ENCODE measurements at regions of chr1 and their contacts with region 1.

Region 1: GRCh38 chr1:56831871-56832693 is 12.9 kb upstream of the FYB2 start:
- DNase-seq: peak in 1 of 2 donors; percentile 26
- H3K4me3 ChIP-seq: peak overlapping the region; percentile 0 to 7
- H3K27ac ChIP-seq: no peak overlapping the region
- H3K4me1 ChIP-seq: peaks cover 0 to 4% (median 0%) of the 10 kb centered on the region in 4 donors
- H3K27me3 ChIP-seq: peaks cover 0 to 24% of the 10 kb centered on the region in 2 donors
- CTCF ChIP-seq: peak; percentile 86 to 94

Region 2: DNA sequence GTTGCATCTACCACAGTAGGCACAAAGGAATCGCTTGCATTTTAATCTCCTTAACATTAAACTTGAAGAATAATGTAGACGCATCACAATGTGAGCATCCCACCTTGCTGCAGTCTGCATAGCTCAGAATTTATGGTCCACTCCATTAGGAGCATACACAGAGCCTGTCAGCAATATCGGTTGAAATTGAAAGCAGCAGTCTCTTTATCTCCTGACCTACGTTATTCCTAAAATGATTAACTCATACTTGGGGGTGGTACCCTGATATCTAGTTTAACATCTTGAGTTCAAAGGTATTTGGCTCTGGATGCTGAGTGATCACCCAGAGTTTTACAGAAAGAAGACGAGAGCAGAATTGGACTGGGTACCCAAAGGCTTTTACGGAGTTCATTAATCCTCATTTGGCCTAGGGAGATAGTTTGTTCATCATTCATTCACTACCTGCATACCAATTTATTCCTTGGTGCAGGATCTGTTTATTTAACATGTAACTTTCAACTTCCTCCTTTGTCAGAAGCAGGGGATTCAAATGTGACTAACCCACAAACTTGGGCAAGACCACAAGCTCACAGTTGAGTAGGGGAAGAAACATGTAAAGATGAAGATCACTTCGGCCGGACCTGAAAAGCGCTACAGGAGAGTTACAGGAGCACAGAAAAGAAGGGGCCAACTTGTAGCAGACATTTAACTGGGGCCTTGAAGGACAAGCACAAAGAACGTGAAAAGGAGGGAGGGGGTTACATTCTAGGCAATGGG is 403.9 kb after region 1 on chr1:
- intact Hi-C with region 1: no loop called
- DNase-seq: no peak
- H3K4me3 ChIP-seq: no peak overlapping the region
- H3K27ac ChIP-seq: no peak overlapping the region
- H3K4me1 ChIP-seq: no peaks in the 10 kb centered on the region
- H3K27me3 ChIP-seq: no peaks in the 10 kb centered on the region
- CTCF ChIP-seq: no peak

Region 3: DNA sequence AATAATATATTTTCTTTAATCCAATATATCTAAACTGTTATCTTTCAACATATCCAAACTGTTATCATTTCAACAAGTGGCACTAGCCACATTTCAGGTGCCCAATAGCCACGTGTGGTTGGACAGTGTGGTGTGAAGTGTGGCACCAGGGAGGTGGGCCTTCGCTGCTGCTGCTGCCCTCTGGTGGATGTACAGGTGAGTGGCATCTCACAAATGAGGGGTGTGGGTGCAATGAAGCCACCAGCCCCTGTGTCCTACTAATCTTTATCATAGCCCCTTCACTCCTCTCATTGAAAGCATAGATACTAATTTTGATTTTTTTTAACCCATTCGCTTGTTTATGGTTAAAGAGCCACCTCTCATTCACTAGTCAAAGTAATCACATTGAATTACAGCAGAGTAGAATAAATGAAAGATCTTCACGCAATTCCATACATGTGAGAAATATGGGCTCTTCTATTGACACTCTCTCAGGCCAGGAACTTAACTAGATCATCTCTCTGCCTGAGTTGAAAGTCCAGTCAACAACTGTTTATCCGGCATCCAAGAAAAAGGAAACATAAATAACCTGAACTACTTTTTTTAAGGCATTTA is 1215.3 kb after region 1 on chr1:
- intact Hi-C with region 1: loop called (anchors 5 kb)
- DNase-seq: no peak
- H3K4me3 ChIP-seq: no peak overlapping the region
- H3K27ac ChIP-seq: no peak overlapping the region
- H3K4me1 ChIP-seq: no peaks in the 10 kb centered on the region
- H3K27me3 ChIP-seq: no peaks in the 10 kb centered on the region
- CTCF ChIP-seq: peak; percentile 32 to 53

Region 4: GRCh38 chr1:58162952-58163550 is 1331.0 kb after region 1 on chr1:
- intact Hi-C with region 1: loop called (anchors 5 kb)
- DNase-seq: peak in 1 of 2 donors; percentile 41
- H3K4me3 ChIP-seq: no peak overlapping the region
- H3K27ac ChIP-seq: no peak overlapping the region
- H3K4me1 ChIP-seq: peaks cover 0 to 3% (median 0%) of the 10 kb centered on the region in 4 donors
- H3K27me3 ChIP-seq: no peaks in the 10 kb centered on the region
- CTCF ChIP-seq: peak; percentile 49 to 80

Measured in tibial artery (tissue), 4 donors.